ENCODE measurements at regions of chr2 and their contacts with region 1.

Region 1: GRCh38 chr2:177679611-177680605 is 287.3 kb downstream of the AGPS start:
- DNase-seq: no peak
- ATAC-seq: no peak
- H3K4me3 ChIP-seq: no peak overlapping the region
- H3K27ac ChIP-seq: no peak overlapping the region
- H3K4me1 ChIP-seq: no peaks in the 10 kb centered on the region
- H3K27me3 ChIP-seq: no peaks in the 10 kb centered on the region
- CTCF ChIP-seq: no peak
- POLR2A ChIP-seq: no peak
- RAD21 ChIP-seq: no peak

Region 2: GRCh38 chr2:176852667-176853066 is 827.2 kb before region 1 on chr2:
- CTCF ChIA-PET with region 1: no interaction called
- POLR2A ChIA-PET with region 1: no interaction called
- dilution Hi-C with region 1: no loop called
- in situ Hi-C with region 1: no loop called
- intact Hi-C with region 1: no loop called
- DNase-seq: no peak
- ATAC-seq: no peak
- H3K4me3 ChIP-seq: no peak overlapping the region
- H3K27ac ChIP-seq: no peak overlapping the region
- H3K4me1 ChIP-seq: no peaks in the 10 kb centered on the region
- H3K27me3 ChIP-seq: no peaks in the 10 kb centered on the region
- CTCF ChIP-seq: no peak
- POLR2A ChIP-seq: no peak
- RAD21 ChIP-seq: no peak

Region 3: DNA sequence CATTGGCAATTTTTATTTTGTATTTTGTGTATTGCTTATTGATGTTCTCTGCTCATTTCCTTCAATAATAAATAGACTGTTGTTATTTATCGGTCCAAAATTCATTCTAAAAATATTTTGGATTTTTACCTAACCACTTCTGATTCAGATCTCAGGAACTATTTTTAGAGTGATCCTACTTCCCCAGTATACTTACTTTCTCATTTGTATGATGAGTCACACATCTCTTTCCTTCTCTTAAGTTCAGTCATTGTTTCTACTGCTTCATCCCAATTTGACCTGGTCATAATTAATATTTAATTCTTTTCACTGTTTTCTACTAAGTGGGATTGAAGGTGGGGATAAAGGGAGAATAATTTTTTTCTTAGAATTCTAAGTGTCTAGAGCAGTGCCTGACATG is 212.3 kb before region 1 on chr2:
- CTCF ChIA-PET with region 1: no interaction called
- POLR2A ChIA-PET with region 1: no interaction called
- dilution Hi-C with region 1: no loop called
- in situ Hi-C with region 1: no loop called
- intact Hi-C with region 1: no loop called
- DNase-seq: peak; percentile 76
- ATAC-seq: peak; percentile 80; the same call in 1 of the 2 replicates
- H3K4me3 ChIP-seq: no peak overlapping the region
- H3K27ac ChIP-seq: no peak overlapping the region
- H3K4me1 ChIP-seq: no peaks in the 10 kb centered on the region; the same call in 1 of the 2 replicates
- H3K27me3 ChIP-seq: no peaks in the 10 kb centered on the region
- CTCF ChIP-seq: no peak
- POLR2A ChIP-seq: no peak
- RAD21 ChIP-seq: no peak

Region 4: DNA sequence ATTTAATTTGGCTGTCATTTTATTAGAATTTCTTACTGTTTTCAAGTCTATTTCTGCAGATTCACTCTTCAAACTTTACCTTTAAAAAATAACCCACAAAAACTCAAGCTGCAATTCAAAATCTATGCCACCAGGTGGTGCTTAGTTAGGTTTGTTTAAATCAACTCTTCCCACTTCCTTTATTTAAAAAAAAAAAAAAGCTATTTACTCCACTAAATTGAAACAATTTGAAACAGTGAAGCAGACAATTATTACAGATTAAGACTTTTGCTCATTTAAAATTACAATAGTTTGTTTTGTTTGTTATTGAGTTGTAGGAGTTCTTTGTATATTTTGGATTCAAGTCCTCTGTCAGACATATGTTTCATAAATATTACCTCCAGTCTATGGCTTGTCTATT is 92.6 kb after region 1 on chr2:
- CTCF ChIA-PET with region 1: no interaction called
- POLR2A ChIA-PET with region 1: no interaction called
- dilution Hi-C with region 1: no loop called
- in situ Hi-C with region 1: no loop called
- intact Hi-C with region 1: no loop called
- DNase-seq: peak; percentile 30
- ATAC-seq: no peak
- H3K4me3 ChIP-seq: no peak overlapping the region
- H3K27ac ChIP-seq: no peak overlapping the region
- H3K4me1 ChIP-seq: no peaks in the 10 kb centered on the region
- H3K27me3 ChIP-seq: peaks cover 2% of the 10 kb centered on the region
- CTCF ChIP-seq: peak; percentile 52
- POLR2A ChIP-seq: no peak
- RAD21 ChIP-seq: no peak

Region 5: GRCh38 chr2:177921726-177922125 is 241.8 kb after region 1 on chr2:
- CTCF ChIA-PET with region 1: no interaction called
- POLR2A ChIA-PET with region 1: no interaction called
- dilution Hi-C with region 1: no loop called
- in situ Hi-C with region 1: no loop called
- intact Hi-C with region 1: no loop called
- DNase-seq: no peak
- ATAC-seq: no peak
- H3K4me3 ChIP-seq: no peak overlapping the region
- H3K27ac ChIP-seq: no peak overlapping the region
- H3K4me1 ChIP-seq: no peaks in the 10 kb centered on the region
- H3K27me3 ChIP-seq: no peaks in the 10 kb centered on the region
- CTCF ChIP-seq: no peak
- POLR2A ChIP-seq: no peak
- RAD21 ChIP-seq: no peak

Region 6: DNA sequence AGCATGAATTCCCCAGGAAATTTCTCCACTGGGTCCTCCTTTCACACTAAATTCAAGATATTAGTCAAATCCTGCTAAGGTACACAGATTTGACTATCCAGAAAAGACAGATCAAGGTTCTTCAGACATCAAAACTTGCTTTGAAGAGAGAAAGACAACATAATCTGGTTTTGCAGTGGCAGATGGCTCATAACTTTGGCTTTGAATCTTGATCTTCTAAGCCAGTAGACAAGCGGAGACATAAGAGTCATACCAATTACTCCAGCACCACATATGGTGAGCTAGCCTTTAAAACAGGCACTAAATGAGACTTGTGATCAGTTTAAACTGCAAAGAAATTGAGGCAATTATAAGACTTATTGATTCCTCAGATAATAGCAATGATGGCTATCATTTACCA is 363.4 kb after region 1 on chr2:
- CTCF ChIA-PET with region 1: no interaction called
- POLR2A ChIA-PET with region 1: no interaction called
- dilution Hi-C with region 1: no loop called
- in situ Hi-C with region 1: no loop called
- intact Hi-C with region 1: loop called (anchors 5 kb)
- DNase-seq: no peak
- ATAC-seq: no peak
- H3K4me3 ChIP-seq: no peak overlapping the region
- H3K27ac ChIP-seq: no peak overlapping the region
- H3K4me1 ChIP-seq: no peaks in the 10 kb centered on the region
- H3K27me3 ChIP-seq: no peaks in the 10 kb centered on the region
- CTCF ChIP-seq: no peak
- POLR2A ChIP-seq: no peak
- RAD21 ChIP-seq: no peak